ENCODE measurements at regions of chr1 and their contacts with region 1.

Region 1: DNA sequence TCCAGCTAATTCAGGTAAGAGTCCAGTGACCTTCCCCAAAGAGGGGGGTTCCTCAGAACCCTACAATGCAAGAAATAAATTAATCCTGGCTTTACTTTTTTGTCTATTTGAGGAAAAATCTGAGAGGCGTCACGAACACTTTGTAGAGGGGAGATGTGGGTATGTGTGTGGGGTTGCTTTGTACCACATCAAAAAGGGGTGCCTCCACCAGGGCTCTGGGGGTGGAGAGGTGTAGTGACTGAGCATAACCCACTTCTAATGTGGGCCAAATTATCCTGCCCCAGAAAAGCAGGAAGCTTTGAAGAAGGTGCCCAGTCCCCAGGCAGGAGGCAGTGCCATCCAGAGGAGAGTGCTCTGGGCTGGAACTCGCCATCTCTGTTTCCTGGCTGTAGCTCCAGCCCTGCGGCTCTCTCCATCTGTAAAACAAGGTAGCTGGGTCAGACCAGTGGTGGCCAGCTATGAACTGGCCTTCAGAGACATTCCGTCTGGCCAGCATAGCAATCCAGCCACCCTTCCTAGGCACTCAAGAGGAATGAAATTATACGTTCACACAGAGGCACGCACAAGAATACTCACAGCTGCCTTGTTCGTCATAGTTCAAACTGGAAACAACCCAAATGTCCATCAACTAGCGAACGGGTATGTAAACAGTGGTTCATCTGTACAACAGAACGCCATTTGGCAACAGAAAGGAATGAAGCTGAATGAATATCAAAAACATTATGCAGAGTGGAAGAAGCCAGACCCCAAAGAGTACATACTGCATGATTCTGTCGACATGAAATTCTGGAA is 45.4 kb upstream of the TNFRSF1B start:
- DNase-seq: peak in 1 of 2 donors; percentile 76
- H3K4me3 ChIP-seq: no peak overlapping the region
- H3K27ac ChIP-seq: peak overlapping the region in 2 of 5 donors; percentile 44 to 80
- H3K4me1 ChIP-seq: peaks cover 7 to 22% (median 16%) of the 10 kb centered on the region in 4 donors
- H3K27me3 ChIP-seq: peaks cover 0 to 3% (median 0%) of the 10 kb centered on the region in 3 donors
- CTCF ChIP-seq: no peak
- EP300 ChIP-seq: peak; percentile 33
- POLR2A ChIP-seq: no peak

Region 2: GRCh38 chr1:11719313-11720032 is 401.9 kb before region 1 on chr1:
- intact Hi-C with region 1: no loop called
- DNase-seq: peak; percentile 88 to 90
- H3K4me3 ChIP-seq: peak overlapping the region; percentile 36 to 53 (median 47)
- H3K27ac ChIP-seq: peak overlapping the region; percentile 61 to 87 (median 77)
- H3K4me1 ChIP-seq: peaks cover 0 to 43% (median 20%) of the 10 kb centered on the region in 4 donors
- H3K27me3 ChIP-seq: peaks cover 0 to 5% (median 0%) of the 10 kb centered on the region in 3 donors
- CTCF ChIP-seq: peak in 5 of 7 experiments; percentile 88 to 96 (median 95)
- EP300 ChIP-seq: no peak
- POLR2A ChIP-seq: no peak

Region 3: GRCh38 chr1:12177999-12178441 is 56.6 kb after region 1 on chr1:
- intact Hi-C with region 1: no loop called
- DNase-seq: peak; percentile 63 to 79
- H3K4me3 ChIP-seq: no peak overlapping the region
- H3K27ac ChIP-seq: peak overlapping the region; percentile 7 to 92 (median 81)
- H3K4me1 ChIP-seq: peaks cover 50 to 95% (median 69%) of the 10 kb centered on the region in 4 donors
- H3K27me3 ChIP-seq: no peaks in the 10 kb centered on the region
- CTCF ChIP-seq: no peak
- EP300 ChIP-seq: no peak
- POLR2A ChIP-seq: no peak

Region 4: GRCh38 chr1:12208764-12209494 is 87.5 kb after region 1 on chr1:
- intact Hi-C with region 1: loop called (anchors 2 kb)
- DNase-seq: peak; percentile 91 to 93
- H3K4me3 ChIP-seq: no peak overlapping the region
- H3K27ac ChIP-seq: no peak overlapping the region
- H3K4me1 ChIP-seq: peaks cover 0 to 22% (median 19%) of the 10 kb centered on the region in 4 donors
- H3K27me3 ChIP-seq: no peaks in the 10 kb centered on the region
- CTCF ChIP-seq: peak in 6 of 7 experiments; percentile 74 to 98 (median 92)
- EP300 ChIP-seq: no peak
- POLR2A ChIP-seq: no peak